Naive thymus-derived CD4-positive, alpha-beta T cell (primary cell): ENCODE measurements at regions of chr1 and their contacts with region 1.

Region 1: DNA sequence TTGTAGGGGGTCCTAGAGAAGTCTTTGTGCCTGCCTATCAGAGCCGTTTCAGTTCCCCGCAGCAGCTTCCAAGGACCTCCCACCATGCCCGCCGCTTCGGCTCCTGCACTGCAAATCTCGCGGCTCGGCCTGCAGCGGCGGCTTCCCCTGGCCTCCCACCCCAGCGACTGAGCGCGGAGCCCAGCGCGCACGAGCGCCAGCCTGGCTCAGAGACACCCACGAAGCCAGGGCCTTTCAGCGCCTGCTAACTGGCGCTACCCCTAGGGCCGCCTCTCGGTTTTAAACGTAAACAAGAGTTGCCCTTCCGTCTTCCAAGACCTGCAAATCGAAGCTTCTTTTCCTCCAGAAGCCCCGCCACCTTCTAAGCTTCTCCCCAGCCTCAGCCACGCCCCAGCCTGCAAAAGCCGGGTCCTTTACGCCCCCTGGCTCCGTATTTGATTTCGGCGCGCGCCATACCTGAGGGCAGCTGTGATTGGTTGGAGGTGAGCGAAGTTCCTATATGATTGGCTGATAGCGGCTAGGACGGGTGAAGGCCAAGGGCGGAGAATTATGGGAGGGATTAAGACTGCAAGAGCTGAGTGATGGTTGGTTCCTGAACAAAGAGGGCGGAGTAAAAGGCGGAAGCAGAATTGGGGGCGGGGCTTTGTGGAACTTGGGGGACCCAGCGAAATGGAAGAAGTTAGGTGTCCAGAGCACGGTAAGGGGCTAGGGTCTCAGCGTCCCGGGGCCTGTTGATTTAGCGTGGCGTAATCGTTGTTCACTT is at the start of gene TTF2:
- DNase-seq: peak; percentile 82 to 99 (median 98)
- ATAC-seq: peak; percentile 96
- H3K4me3 ChIP-seq: peak within 1 kb of the TSS; percentile 81
- H3K4me3 Mint-ChIP-seq: no peak within 1 kb of the TSS
- H3K27ac ChIP-seq: peak within 1 kb of the TSS; percentile 82
- H3K27ac Mint-ChIP-seq: peak within 1 kb of the TSS in 4 of 9 donors; percentile 45 to 83 (median 62)
- H3K4me1 ChIP-seq: peaks cover 6 to 9% of the 10 kb centered on the region in 2 donors
- H3K4me1 Mint-ChIP-seq: peaks cover 19 to 60% (median 41%) of the 10 kb centered on the region in 7 donors
- H3K27me3 ChIP-seq: no peaks in the 10 kb centered on the region
- H3K27me3 Mint-ChIP-seq: no peaks in the 10 kb centered on the region
- total RNA-seq, gene TTF2: 27.6 to 74.4 (median 35.2) TPM

Region 2: DNA sequence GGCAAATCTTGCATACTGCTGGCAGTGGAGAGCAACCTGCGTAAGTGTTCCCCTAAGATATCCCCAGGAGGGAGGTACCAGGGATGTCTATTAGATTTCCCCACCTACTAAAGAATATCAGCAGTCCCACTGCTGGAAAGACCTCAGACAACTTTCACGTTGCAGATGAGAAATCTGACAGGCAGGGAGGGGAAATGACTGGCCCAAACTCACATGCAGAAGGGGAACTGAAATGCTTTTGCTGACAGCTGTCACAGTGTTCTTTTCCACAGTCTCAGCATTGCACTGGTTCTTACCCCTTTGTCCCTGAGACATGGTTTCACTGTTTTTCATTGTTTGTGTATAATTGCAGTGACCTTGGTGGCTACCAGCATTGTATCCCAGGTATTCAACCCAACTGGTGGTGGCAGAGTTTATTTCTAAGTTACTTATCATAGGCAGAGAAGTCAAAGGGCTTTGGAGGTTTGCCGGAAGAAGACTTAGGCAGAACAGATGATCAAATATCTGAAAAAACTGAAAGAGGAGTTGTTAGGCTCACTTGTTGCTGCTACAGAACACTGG is 771.6 kb before region 1 on chr1:
- CTCF ChIA-PET with region 1: no interaction called
- POLR2A ChIA-PET with region 1: no interaction called
- intact Hi-C with region 1: no loop called
- DNase-seq: no peak
- ATAC-seq: no peak
- H3K4me3 ChIP-seq: no peak overlapping the region
- H3K4me3 Mint-ChIP-seq: no peak overlapping the region
- H3K27ac ChIP-seq: no peak overlapping the region
- H3K27ac Mint-ChIP-seq: peak overlapping the region in 3 of 9 donors; percentile 25 to 80 (median 33)
- H3K4me1 ChIP-seq: no peaks in the 10 kb centered on the region
- H3K4me1 Mint-ChIP-seq: peaks cover 0 to 42% (median 26%) of the 10 kb centered on the region in 7 donors
- H3K27me3 ChIP-seq: no peaks in the 10 kb centered on the region
- H3K27me3 Mint-ChIP-seq: peaks cover 0 to 25% (median 0%) of the 10 kb centered on the region in 5 donors

Region 3: GRCh38 chr1:116570358-116571200 is 489.3 kb before region 1 on chr1 and contains the start of gene CD58:
- CTCF ChIA-PET with region 1: no interaction called
- POLR2A ChIA-PET with region 1: interaction called, 3 read pairs
- intact Hi-C with region 1: loop called (anchors 1 kb)
- DNase-seq: peak; percentile 35 to 86 (median 64)
- ATAC-seq: peak; percentile 87
- H3K4me3 ChIP-seq: peak within 1 kb of the TSS; percentile 83
- H3K4me3 Mint-ChIP-seq: peak within 1 kb of the TSS; percentile 86 to 97 (median 90)
- H3K27ac ChIP-seq: peak within 1 kb of the TSS; percentile 70
- H3K27ac Mint-ChIP-seq: peak within 1 kb of the TSS in 7 of 9 donors; percentile 68 to 95 (median 78)
- H3K4me1 ChIP-seq: peaks cover 10 to 30% of the 10 kb centered on the region in 2 donors
- H3K4me1 Mint-ChIP-seq: peaks cover 12 to 62% (median 31%) of the 10 kb centered on the region in 7 donors
- H3K27me3 ChIP-seq: no peaks in the 10 kb centered on the region
- H3K27me3 Mint-ChIP-seq: no peaks in the 10 kb centered on the region
- total RNA-seq, gene CD58: 3.3 to 35.0 (median 4.4) TPM

Region 4: DNA sequence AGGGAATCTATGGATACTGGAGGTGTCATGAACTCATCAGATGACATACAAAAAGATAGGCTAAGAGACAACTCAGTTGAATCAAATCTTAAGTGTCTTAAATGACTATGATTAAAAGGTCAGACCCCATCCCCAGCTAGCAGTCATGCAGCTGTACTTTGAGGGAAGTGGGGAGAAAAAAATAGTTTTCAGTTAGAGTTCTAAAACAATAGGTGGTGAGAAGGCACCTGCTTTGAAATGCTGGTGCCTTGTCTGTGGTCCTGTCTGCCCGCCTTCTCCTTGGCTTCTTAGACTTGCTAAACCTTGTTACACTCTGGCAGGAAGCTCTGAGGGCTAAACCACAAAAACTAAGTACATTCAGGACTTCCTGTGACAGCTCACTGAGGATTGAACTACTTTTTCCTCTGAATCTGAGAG is 290.3 kb before region 1 on chr1:
- CTCF ChIA-PET with region 1: interaction called, 6 read pairs
- POLR2A ChIA-PET with region 1: interaction called, 19 read pairs
- intact Hi-C with region 1: loop called (anchors 1 kb)
- DNase-seq: peak in 8 of 9 donors; percentile 60 to 92 (median 86)
- ATAC-seq: peak; percentile 91
- H3K4me3 ChIP-seq: peak overlapping the region; percentile 24
- H3K4me3 Mint-ChIP-seq: peak overlapping the region; percentile 51 to 99 (median 78)
- H3K27ac ChIP-seq: peak overlapping the region; percentile 89
- H3K27ac Mint-ChIP-seq: peak overlapping the region; percentile 84 to 100 (median 97)
- H3K4me1 ChIP-seq: peaks cover 80 to 81% of the 10 kb centered on the region in 2 donors
- H3K4me1 Mint-ChIP-seq: peaks cover 64 to 97% (median 91%) of the 10 kb centered on the region in 7 donors
- H3K27me3 ChIP-seq: no peaks in the 10 kb centered on the region
- H3K27me3 Mint-ChIP-seq: no peaks in the 10 kb centered on the region

Region 5: DNA sequence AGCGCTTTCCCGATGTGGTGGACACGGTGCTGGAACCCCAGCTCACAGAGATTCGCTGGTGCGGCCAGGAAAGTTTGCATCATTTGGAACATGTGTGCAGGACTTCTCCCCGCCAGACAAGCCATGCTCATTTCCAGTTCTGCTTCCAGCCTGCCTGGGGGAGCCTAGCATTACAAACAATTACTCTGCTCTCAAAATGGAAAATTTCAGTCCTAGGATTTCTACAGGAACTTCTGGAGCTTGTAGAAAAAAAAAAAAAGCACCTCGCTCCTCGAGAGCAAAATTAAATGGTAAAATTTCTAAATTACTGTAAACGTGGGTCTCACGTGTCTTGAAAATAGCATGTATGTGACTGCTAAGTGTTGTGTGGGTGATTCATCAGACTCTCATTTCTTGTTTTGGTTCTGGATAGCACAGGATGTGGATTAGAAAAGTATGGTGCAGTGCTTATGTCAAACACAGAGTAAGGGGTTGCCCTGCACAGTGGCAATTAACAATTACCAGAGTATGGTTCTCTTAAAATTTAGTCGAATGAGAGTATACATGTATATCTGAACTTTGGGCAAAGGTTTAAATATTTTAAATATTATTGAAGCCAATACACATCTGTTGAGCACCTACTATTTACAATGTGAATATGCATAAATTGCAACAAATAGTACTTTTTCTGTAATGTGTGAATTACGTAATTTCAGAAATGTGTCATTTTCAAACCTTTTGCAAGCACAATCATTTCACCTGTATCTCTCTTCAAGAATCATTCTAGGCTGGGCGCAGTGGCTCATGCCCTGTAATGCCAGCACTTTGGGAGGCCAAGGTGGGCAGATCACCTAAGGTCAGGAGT is 211.9 kb before region 1 on chr1:
- CTCF ChIA-PET with region 1: no interaction called
- POLR2A ChIA-PET with region 1: no interaction called
- intact Hi-C with region 1: no loop called
- DNase-seq: peak in 1 of 9 donors; percentile 7
- ATAC-seq: peak; percentile 57
- H3K4me3 ChIP-seq: no peak overlapping the region
- H3K4me3 Mint-ChIP-seq: no peak overlapping the region
- H3K27ac ChIP-seq: no peak overlapping the region
- H3K27ac Mint-ChIP-seq: peak overlapping the region in 4 of 9 donors; percentile 12 to 47 (median 38)
- H3K4me1 ChIP-seq: no peaks in the 10 kb centered on the region
- H3K4me1 Mint-ChIP-seq: peaks cover 2 to 22% (median 5%) of the 10 kb centered on the region in 7 donors
- H3K27me3 ChIP-seq: no peaks in the 10 kb centered on the region
- H3K27me3 Mint-ChIP-seq: no peaks in the 10 kb centered on the region

Region 6: GRCh38 chr1:116982319-116983004 is 77.4 kb before region 1 on chr1:
- CTCF ChIA-PET with region 1: no interaction called
- POLR2A ChIA-PET with region 1: interaction called, 75 read pairs
- intact Hi-C with region 1: loop called (anchors 1 kb)
- DNase-seq: no peak
- ATAC-seq: no peak
- H3K4me3 ChIP-seq: no peak overlapping the region
- H3K4me3 Mint-ChIP-seq: no peak overlapping the region
- H3K27ac ChIP-seq: no peak overlapping the region
- H3K27ac Mint-ChIP-seq: peak overlapping the region in 3 of 9 donors; percentile 3 to 63 (median 60)
- H3K4me1 ChIP-seq: peaks cover 6 to 23% of the 10 kb centered on the region in 2 donors
- H3K4me1 Mint-ChIP-seq: peaks cover 15 to 44% (median 34%) of the 10 kb centered on the region in 7 donors
- H3K27me3 ChIP-seq: no peaks in the 10 kb centered on the region
- H3K27me3 Mint-ChIP-seq: peaks cover 0 to 2% (median 0%) of the 10 kb centered on the region in 5 donors

Region 7: GRCh38 chr1:117121776-117122697 is 62.2 kb after region 1 on chr1:
- CTCF ChIA-PET with region 1: no interaction called
- POLR2A ChIA-PET with region 1: no interaction called
- intact Hi-C with region 1: loop called (anchors 1 to 2 kb)
- DNase-seq: peak; percentile 64 to 81 (median 74)
- ATAC-seq: peak; percentile 90
- H3K4me3 ChIP-seq: peak overlapping the region; percentile 97
- H3K4me3 Mint-ChIP-seq: peak overlapping the region; percentile 83 to 90 (median 87)
- H3K27ac ChIP-seq: peak overlapping the region; percentile 61
- H3K27ac Mint-ChIP-seq: peak overlapping the region in 2 of 9 donors; percentile 16 to 53
- H3K4me1 ChIP-seq: peaks cover 0 to 4% of the 10 kb centered on the region in 2 donors
- H3K4me1 Mint-ChIP-seq: peaks cover 0 to 13% (median 4%) of the 10 kb centered on the region in 7 donors
- H3K27me3 ChIP-seq: no peaks in the 10 kb centered on the region
- H3K27me3 Mint-ChIP-seq: peaks cover 5 to 21% (median 6%) of the 10 kb centered on the region in 5 donors

Region 8: DNA sequence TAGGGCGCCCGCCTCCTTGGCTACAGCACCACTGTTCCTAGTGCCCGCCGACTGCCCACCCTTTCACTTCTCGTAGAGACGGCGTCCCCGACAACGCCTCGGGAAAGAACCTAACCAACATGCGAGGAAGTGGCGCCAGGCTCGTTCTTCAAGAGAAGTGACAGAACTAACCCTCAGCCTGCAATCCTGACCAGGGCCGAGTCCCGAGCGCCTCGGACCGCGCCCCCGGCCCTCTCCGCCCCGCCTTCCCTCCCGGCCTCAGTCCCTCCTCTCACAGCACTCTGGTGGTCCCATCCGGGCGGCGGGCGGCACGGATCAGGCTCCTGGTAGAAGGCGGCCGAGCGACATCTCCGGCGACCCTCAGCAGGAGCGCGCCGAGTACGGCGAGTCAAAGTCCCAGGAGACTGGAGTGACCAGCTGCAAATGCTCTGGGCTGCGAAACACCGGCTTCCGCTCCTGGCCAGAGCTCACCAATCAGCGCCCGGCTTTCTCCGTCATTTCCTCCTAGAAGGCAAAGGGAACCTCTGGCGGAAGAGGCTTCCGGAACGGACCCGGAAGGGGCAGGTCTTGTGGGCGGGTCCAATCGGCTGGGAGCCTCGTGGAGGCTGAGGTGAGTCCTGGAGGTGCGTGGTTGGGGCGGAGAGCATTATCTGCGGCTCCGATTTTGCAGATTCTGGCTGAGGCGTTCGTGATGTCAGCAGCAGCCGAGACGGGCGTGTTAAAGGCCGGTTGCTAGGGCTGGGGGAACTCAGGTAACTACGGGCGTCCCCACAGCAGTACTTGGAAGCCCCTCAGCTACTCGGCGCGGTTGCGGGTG is 869.5 kb after region 1 on chr1 and contains the starts of genes GDAP2 and WDR3:
- CTCF ChIA-PET with region 1: no interaction called
- POLR2A ChIA-PET with region 1: no interaction called
- intact Hi-C with region 1: loop called in 1 of 2 experiments (anchors 1 kb)
- DNase-seq: peak; percentile 84 to 98 (median 94)
- ATAC-seq: peak; percentile 96
- H3K4me3 ChIP-seq: peak within 1 kb of the TSS; percentile 94
- H3K4me3 Mint-ChIP-seq: peak within 1 kb of the TSS; percentile 90 to 97 (median 94)
- H3K27ac ChIP-seq: peak within 1 kb of the TSS; percentile 89
- H3K27ac Mint-ChIP-seq: peak within 1 kb of the TSS; percentile 74 to 97 (median 94)
- H3K4me1 ChIP-seq: peaks cover 24 to 30% of the 10 kb centered on the region in 2 donors
- H3K4me1 Mint-ChIP-seq: peaks cover 41 to 79% (median 71%) of the 10 kb centered on the region in 7 donors
- H3K27me3 ChIP-seq: no peaks in the 10 kb centered on the region
- H3K27me3 Mint-ChIP-seq: peaks cover 0 to 2% (median 0%) of the 10 kb centered on the region in 5 donors
- total RNA-seq, gene GDAP2: 22.3 to 31.2 (median 25.2) TPM
- total RNA-seq, gene WDR3: 12.2 to 34.6 (median 30.0) TPM